ENCODE measurements at regions of chr17 and their contacts with region 1.

Region 1: GRCh38 chr17:74957935-74958723 is 14.4 kb downstream of the HID1 start:
- DNase-seq: peak; percentile 70 to 78 (median 74)
- ATAC-seq: peak; percentile 57 to 73 (median 69)
- H3K4me3 ChIP-seq: no peak overlapping the region
- H3K27ac ChIP-seq: no peak overlapping the region
- H3K4me1 ChIP-seq: no peaks in the 10 kb centered on the region
- H3K27me3 ChIP-seq: no peaks in the 10 kb centered on the region
- CTCF ChIP-seq: peak; percentile 85 to 95 (median 93)
- POLR2A ChIP-seq: no peak

Region 2: DNA sequence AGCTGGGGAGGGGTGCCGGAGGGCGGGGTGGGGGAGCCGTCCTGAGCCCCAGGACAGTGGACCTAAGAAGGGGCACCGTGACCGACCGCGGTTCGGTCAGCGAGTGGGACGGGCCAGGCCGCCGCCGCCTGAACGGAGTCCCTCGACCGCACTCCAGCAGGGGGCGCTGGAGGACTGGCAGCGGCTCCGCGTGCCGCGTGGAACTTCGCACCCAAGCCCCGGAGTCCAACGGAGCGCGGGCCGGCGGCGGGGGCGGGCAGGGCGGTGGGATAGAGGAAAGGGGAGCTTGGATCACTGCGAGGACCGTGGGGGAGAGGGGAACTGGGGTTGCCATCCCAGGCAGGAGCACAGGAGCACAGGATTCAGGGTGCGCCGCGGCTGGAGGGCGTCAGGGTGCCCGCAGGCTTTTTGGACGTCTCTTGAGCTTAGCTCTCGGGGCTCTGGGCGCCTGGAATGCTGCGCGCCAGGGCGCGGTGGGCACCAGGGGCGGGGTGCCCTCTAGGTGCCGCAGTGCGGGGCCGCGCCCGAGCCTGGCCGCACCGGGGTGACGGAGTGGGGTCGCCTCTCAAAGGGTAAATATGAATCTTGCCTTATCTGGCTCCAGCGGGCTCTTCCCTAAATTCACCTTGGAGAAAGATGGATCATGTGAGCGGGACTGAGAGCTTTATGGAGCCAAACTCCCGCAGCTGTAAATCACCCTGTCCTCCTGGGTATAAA is 34.4 kb before region 1 on chr17:
- intact Hi-C with region 1: loop called in 1 of 2 experiments (anchors 5 kb)
- DNase-seq: peak; percentile 76 to 79 (median 77)
- ATAC-seq: peak; percentile 68 to 87 (median 82)
- H3K4me3 ChIP-seq: no peak overlapping the region
- H3K27ac ChIP-seq: no peak overlapping the region
- H3K4me1 ChIP-seq: peaks cover 0 to 12% (median 4%) of the 10 kb centered on the region in 4 donors
- H3K27me3 ChIP-seq: peaks cover 0 to 22% of the 10 kb centered on the region in 2 donors
- CTCF ChIP-seq: peak; percentile 59 to 88 (median 82)
- POLR2A ChIP-seq: no peak

Region 3: DNA sequence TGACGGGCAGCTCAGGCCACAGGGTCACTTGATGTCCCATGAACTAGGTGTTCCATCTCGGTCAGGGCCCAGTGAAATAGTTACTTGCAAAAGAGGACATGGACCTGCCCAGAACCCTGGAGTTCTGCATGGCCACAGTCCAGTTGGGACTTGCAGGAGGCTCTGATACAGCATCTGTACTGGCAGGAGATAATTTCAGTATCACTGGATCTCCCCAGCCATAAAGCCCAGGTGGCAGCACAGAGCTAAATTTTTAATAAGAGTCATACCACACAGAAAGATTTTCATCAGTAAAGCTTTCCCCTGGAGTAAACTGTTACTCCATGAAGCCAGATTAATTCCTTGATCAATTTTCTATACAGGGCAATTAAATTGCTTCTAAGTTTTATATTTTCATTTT is 111.7 kb after region 1 on chr17:
- intact Hi-C with region 1: no loop called
- DNase-seq: no peak
- ATAC-seq: peak; percentile 65 to 68 (median 66)
- H3K4me3 ChIP-seq: no peak overlapping the region
- H3K27ac ChIP-seq: no peak overlapping the region
- H3K4me1 ChIP-seq: no peaks in the 10 kb centered on the region
- H3K27me3 ChIP-seq: no peaks in the 10 kb centered on the region
- CTCF ChIP-seq: peak; percentile 37 to 52 (median 43)
- POLR2A ChIP-seq: no peak